CD4-positive, alpha-beta T cell (primary cell): ENCODE measurements at regions of chr2 and their contacts with region 1.

Region 1: GRCh38 chr2:237474931-237475703 is 11.9 kb upstream of the MLPH start:
- DNase-seq: peak; percentile 57 to 85 (median 72)
- ATAC-seq: peak; percentile 85
- H3K4me3 ChIP-seq: peak overlapping the region; percentile 67
- H3K4me3 Mint-ChIP-seq: peak overlapping the region; percentile 93
- H3K27ac ChIP-seq: no peak overlapping the region
- H3K27ac Mint-ChIP-seq: peak overlapping the region; percentile 82
- H3K4me1 ChIP-seq: peaks cover 20% of the 10 kb centered on the region
- H3K4me1 Mint-ChIP-seq: peaks cover 32% of the 10 kb centered on the region
- H3K27me3 ChIP-seq: peaks cover 0 to 5% of the 10 kb centered on the region in 2 experiments
- H3K27me3 Mint-ChIP-seq: peaks cover 15% of the 10 kb centered on the region
- CTCF ChIP-seq: peak; percentile 97

Region 2: GRCh38 chr2:237085248-237086221 is 389.6 kb before region 1 on chr2 and contains the start of gene COPS8:
- CTCF ChIA-PET with region 1: interaction called, 4 read pairs
- POLR2A ChIA-PET with region 1: interaction called, 12 read pairs
- intact Hi-C with region 1: loop called in 1 of 2 experiments (anchors 10 kb)
- DNase-seq: peak; percentile 79 to 95 (median 88)
- ATAC-seq: peak; percentile 97
- H3K4me3 ChIP-seq: peak within 1 kb of the TSS; percentile 95
- H3K4me3 Mint-ChIP-seq: peak within 1 kb of the TSS; percentile 99
- H3K27ac ChIP-seq: peak within 1 kb of the TSS; percentile 76 to 85
- H3K27ac Mint-ChIP-seq: peak within 1 kb of the TSS; percentile 98
- H3K4me1 ChIP-seq: peaks cover 9% of the 10 kb centered on the region
- H3K4me1 Mint-ChIP-seq: peaks cover 35% of the 10 kb centered on the region
- H3K27me3 ChIP-seq: no peaks in the 10 kb centered on the region
- H3K27me3 Mint-ChIP-seq: no peaks in the 10 kb centered on the region
- CTCF ChIP-seq: peak; percentile 47
- total RNA-seq, gene COPS8: 47.9 to 51.7 TPM

Region 3: DNA sequence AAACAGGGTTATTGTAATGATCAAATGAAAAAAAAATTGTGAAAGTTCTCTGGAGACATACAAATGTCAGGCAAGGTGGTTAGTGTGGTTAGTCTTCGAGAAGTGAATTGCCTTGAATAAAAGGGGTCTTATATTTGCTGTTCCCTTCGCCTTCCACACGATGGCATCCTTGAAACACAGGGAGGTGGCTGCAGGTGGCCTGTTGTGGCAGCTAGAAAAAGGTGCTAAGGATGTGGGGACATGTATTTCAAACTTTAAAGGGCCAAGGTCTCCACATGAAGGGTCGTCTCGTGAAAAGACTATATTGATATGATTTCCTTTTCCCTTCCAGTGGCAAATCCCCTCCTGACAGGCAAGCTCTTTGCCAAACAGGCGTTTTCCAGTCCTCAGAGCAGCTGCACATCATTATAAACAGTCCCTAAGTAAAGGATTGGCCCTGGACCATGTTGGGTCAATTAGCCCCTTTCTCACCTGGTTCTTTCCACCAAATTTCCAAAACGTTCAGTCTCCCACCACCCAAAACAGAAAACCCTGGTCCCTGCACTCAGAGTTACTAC is 321.0 kb before region 1 on chr2:
- CTCF ChIA-PET with region 1: interaction called, 10 read pairs
- POLR2A ChIA-PET with region 1: interaction called, 5 read pairs
- intact Hi-C with region 1: loop called (anchors 1 kb)
- DNase-seq: peak; percentile 17 to 74 (median 40)
- ATAC-seq: peak; percentile 66
- H3K4me3 ChIP-seq: no peak overlapping the region
- H3K4me3 Mint-ChIP-seq: no peak overlapping the region
- H3K27ac ChIP-seq: no peak overlapping the region
- H3K27ac Mint-ChIP-seq: no peak overlapping the region
- H3K4me1 ChIP-seq: peaks cover 4% of the 10 kb centered on the region
- H3K4me1 Mint-ChIP-seq: no peaks in the 10 kb centered on the region
- H3K27me3 ChIP-seq: no peaks in the 10 kb centered on the region
- H3K27me3 Mint-ChIP-seq: no peaks in the 10 kb centered on the region
- CTCF ChIP-seq: peak; percentile 61

Region 4: DNA sequence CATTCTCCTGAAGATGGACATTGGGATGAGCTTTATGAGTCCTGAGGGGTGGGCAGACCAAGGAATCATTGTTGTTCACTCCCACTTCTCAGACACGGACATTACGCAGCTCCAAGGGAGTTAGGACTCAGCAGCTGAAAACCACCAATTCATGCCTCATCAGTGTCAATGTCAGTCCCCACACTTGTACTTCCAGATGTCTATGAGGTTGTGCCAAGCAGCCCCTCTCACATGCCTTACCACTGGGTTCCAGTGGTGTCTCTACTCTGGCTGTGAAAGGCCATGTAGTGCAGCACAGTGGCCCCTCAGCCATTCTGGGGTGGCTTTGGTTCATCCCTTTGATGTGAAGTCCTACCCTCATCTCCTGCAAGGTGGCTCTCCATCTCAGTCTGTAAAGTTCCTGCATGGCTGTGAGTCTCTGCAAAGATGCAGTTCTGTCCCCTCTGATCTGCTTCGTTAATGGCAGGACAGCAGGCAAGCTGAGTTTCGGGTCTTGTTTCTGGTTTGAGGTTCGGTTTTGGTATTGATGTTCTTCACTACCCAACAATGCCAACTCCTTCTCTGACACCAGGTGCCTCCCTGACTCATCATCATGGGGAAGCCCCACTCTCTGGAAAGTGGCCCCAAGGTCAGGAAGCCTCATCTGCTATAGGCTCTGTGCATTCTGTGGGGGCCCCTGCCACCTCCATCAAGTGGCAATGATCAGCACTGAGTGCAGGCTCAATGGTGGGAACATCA is 47.2 kb before region 1 on chr2:
- CTCF ChIA-PET with region 1: interaction called, 127 read pairs
- POLR2A ChIA-PET with region 1: interaction called, 59 read pairs
- intact Hi-C with region 1: no loop called
- DNase-seq: peak in 11 of 14 experiments; percentile 33 to 70 (median 49)
- ATAC-seq: peak; percentile 39
- H3K4me3 ChIP-seq: no peak overlapping the region
- H3K4me3 Mint-ChIP-seq: peak overlapping the region; percentile 60
- H3K27ac ChIP-seq: peak overlapping the region in 1 of 2 donors; percentile 13
- H3K27ac Mint-ChIP-seq: peak overlapping the region; percentile 88
- H3K4me1 ChIP-seq: peaks cover 42% of the 10 kb centered on the region
- H3K4me1 Mint-ChIP-seq: peaks cover 94% of the 10 kb centered on the region
- H3K27me3 ChIP-seq: no peaks in the 10 kb centered on the region
- H3K27me3 Mint-ChIP-seq: no peaks in the 10 kb centered on the region
- CTCF ChIP-seq: no peak

Region 5: DNA sequence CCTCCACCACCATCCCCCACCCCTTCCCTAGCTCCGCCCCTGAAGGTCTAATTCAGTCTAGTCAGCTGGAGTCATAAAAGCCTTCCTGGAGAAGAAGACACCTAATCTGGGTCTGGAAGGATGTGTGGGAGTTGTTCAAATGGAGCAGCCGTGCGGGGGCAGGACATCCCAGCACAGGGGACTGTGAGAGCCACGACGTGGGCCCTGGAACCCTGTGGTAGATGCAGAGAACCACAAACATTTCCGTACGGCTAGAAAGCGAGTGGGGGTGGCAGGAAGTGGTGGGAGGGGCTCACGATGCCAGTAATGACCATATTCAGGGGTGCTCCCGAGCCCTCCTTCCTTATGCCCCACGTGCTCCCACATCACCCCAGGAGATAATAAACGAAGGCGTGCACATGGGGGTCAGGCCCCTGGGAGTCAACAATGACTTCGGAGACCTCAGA is 40.2 kb before region 1 on chr2:
- CTCF ChIA-PET with region 1: interaction called, 30 read pairs
- POLR2A ChIA-PET with region 1: interaction called, 24 read pairs
- intact Hi-C with region 1: no loop called
- DNase-seq: peak; percentile 29 to 90 (median 72)
- ATAC-seq: peak; percentile 65
- H3K4me3 ChIP-seq: peak overlapping the region; percentile 22
- H3K4me3 Mint-ChIP-seq: peak overlapping the region; percentile 87
- H3K27ac ChIP-seq: peak overlapping the region in 1 of 2 donors; percentile 48
- H3K27ac Mint-ChIP-seq: peak overlapping the region; percentile 83
- H3K4me1 ChIP-seq: peaks cover 72% of the 10 kb centered on the region
- H3K4me1 Mint-ChIP-seq: peaks cover 84% of the 10 kb centered on the region
- H3K27me3 ChIP-seq: no peaks in the 10 kb centered on the region
- H3K27me3 Mint-ChIP-seq: no peaks in the 10 kb centered on the region
- CTCF ChIP-seq: no peak

Region 6: GRCh38 chr2:238523158-238524110 is 1048.3 kb after region 1 on chr2:
- CTCF ChIA-PET with region 1: no interaction called
- POLR2A ChIA-PET with region 1: no interaction called
- intact Hi-C with region 1: no loop called
- DNase-seq: no peak
- ATAC-seq: no peak
- H3K4me3 ChIP-seq: no peak overlapping the region
- H3K4me3 Mint-ChIP-seq: no peak overlapping the region
- H3K27ac ChIP-seq: no peak overlapping the region
- H3K27ac Mint-ChIP-seq: no peak overlapping the region
- H3K4me1 ChIP-seq: no peaks in the 10 kb centered on the region
- H3K4me1 Mint-ChIP-seq: no peaks in the 10 kb centered on the region
- H3K27me3 ChIP-seq: no peaks in the 10 kb centered on the region
- H3K27me3 Mint-ChIP-seq: peaks cover 22% of the 10 kb centered on the region
- CTCF ChIP-seq: no peak